PC-9 (cell line): ENCODE measurements at regions of chr7 and their contacts with region 1.

Region 1: DNA sequence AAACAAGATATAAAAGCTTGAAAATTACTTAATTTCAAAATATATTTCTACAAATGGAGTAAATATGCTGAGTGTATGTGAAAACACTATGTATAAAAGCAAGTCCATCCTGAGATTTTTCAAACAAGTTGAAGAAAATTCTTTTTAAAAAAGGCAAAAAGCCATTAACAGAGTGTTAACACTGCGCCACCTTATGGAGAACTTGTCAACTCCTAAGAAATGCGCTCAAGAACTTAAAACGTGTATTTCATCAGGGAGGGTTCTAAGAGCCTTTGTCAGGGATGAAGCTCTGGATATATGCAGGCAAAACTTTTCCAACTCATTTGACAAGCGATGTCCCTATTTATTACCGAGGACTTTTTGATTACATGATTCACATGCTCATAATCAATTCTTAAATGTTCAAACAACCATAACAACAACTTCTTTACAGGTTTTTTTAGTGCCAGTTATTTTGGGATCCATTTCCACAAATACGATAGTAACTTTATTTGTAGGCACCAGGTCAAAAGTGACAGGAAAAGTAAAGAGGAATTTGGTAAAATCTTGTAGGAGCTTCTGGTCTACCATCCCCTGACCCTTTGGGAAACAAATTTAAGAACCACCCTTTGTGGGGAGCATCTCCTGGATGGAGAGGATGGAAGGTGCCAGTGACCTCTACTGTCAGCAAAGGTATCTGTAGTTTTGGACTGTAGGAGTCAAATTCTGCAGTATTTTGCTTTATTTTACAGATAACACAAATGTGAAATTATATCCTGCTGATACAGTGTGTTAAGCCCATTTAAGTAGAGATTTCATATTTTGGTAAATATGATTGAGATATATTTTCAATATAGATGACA is 23.2 kb downstream of the CALCR start:
- DNase-seq: peak in 1 of 2 experiments; percentile 6
- H3K4me3 ChIP-seq: no peak overlapping the region
- H3K27ac ChIP-seq: no peak overlapping the region
- H3K4me1 ChIP-seq: no peaks in the 10 kb centered on the region
- H3K27me3 ChIP-seq: no peaks in the 10 kb centered on the region
- CTCF ChIP-seq: peak; percentile 68

Region 2: DNA sequence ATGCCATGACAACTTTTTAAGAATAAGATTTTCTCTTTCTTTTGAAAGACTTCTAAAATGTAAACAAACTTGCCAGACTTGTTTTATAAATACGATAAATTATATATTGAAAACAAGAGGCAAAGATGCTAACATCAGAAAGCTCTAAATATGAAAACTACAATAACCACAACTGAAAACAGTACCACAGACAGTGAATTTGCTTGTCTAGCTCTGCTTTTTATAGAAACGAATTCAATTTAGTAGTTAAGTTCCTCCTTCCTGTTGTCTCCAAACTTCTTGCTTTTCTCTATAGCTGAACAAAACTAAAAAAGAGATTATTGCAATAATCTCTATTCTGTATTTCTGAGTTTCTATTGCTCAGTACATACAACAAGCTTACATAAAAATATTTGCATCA is 124.2 kb before region 1 on chr7:
- CTCF ChIA-PET with region 1: no interaction called
- POLR2A ChIA-PET with region 1: interaction called, 12 read pairs
- intact Hi-C with region 1: no loop called
- DNase-seq: no peak
- H3K4me3 ChIP-seq: no peak overlapping the region
- H3K27ac ChIP-seq: no peak overlapping the region
- H3K4me1 ChIP-seq: no peaks in the 10 kb centered on the region
- H3K27me3 ChIP-seq: no peaks in the 10 kb centered on the region
- CTCF ChIP-seq: no peak

Region 3: GRCh38 chr7:93442478-93443224 is 108.6 kb before region 1 on chr7:
- CTCF ChIA-PET with region 1: interaction called, 6 read pairs
- POLR2A ChIA-PET with region 1: interaction called, 5 read pairs
- intact Hi-C with region 1: loop called (anchors 2 kb)
- DNase-seq: peak in 1 of 2 experiments; percentile 39
- H3K4me3 ChIP-seq: no peak overlapping the region
- H3K27ac ChIP-seq: no peak overlapping the region
- H3K4me1 ChIP-seq: no peaks in the 10 kb centered on the region
- H3K27me3 ChIP-seq: no peaks in the 10 kb centered on the region
- CTCF ChIP-seq: peak; percentile 82